Motor neuron (in vitro differentiated cells): ENCODE measurements at regions of chr7 and their contacts with region 1.

Region 1: GRCh38 chr7:139242741-139243281 is 11.8 kb downstream of the UBN2 start:
- ATAC-seq: peak in 2 of 8 experiments; percentile 61 to 75
- H3K4me3 ChIP-seq: no peak overlapping the region
- H3K27ac ChIP-seq: no peak overlapping the region
- H3K4me1 ChIP-seq: no peaks in the 10 kb centered on the region

Region 2: GRCh38 chr7:138278601-138279000 is 964.2 kb before region 1 on chr7:
- in situ Hi-C with region 1: no loop called
- ATAC-seq: no peak
- H3K4me3 ChIP-seq: no peak overlapping the region
- H3K27ac ChIP-seq: no peak overlapping the region
- H3K4me1 ChIP-seq: no peaks in the 10 kb centered on the region

Region 3: GRCh38 chr7:139095194-139095659 is 147.6 kb before region 1 on chr7:
- in situ Hi-C with region 1: no loop called
- ATAC-seq: no peak
- H3K4me3 ChIP-seq: no peak overlapping the region
- H3K27ac ChIP-seq: no peak overlapping the region
- H3K4me1 ChIP-seq: peaks cover 0 to 4% of the 10 kb centered on the region in 2 donors

Region 4: GRCh38 chr7:139297795-139298194 is 55.0 kb after region 1 on chr7:
- in situ Hi-C with region 1: loop called in 1 of 9 experiments (anchors 10 kb)
- ATAC-seq: no peak
- H3K4me3 ChIP-seq: no peak overlapping the region
- H3K27ac ChIP-seq: no peak overlapping the region
- H3K4me1 ChIP-seq: no peaks in the 10 kb centered on the region